Adrenal gland (tissue), 19 donors: ENCODE measurements at regions of chr16 and their contacts with region 1.

Region 1: DNA sequence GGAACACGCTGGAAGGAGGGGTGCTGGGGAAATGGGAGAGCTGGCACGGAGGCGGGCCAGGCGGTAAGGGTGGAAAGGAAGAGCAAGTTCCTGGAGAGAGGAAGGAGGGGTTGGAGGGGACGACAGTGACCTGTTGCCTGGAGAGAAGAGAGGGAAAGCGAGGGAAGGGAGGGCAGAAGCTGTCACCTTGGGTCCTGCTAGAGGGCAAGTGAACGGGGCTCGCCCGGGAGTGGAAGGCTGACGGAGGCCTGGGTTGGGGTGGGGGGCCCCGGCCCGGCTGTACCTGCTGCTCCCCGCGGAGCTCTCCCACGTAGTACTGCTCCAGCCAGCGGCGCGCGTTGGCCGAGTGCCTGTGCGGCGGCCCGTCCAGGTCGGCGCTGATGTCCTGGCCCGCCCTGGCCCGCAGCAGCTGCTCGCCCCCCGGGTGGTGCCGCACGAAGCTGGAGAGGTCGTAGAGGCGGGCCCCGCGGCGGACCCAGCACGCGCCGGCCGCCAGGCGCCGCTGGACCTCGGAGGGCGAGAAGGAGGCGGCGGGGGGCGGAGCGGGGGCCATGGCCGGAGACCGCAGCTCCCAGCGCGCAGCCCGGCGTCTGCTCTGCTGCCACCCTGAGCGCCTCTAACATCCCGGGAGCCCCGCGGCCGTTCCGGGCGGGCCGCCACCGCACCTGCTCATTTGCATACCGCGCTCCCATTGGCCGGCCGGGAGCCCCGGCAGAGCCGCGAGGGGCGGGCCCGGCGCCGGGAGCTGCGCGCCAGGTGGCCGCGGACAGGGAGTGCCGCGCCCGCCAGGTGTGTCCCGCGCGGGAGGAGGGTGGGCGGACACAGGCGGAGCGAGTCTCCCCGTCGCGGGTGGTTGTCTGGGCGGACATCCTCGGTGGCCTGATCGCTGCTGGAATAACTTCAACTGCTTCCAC is at the start of gene FA2H:
- DNase-seq: peak; percentile 80 to 89 (median 83)
- H3K4me3 ChIP-seq: peak within 1 kb of the TSS in 1 of 4 donors; percentile 61
- H3K27ac ChIP-seq: no peak within 1 kb of the TSS
- H3K4me1 ChIP-seq: peaks cover 6 to 15% of the 10 kb centered on the region in 2 donors
- H3K27me3 ChIP-seq: no peaks in the 10 kb centered on the region
- CTCF ChIP-seq: peak in 3 of 6 experiments; percentile 8 to 37 (median 31)
- POLR2A ChIP-seq: peak in 1 of 2 donors; percentile 50
- total RNA-seq, gene FA2H: 0.18 to 6.1 (median 0.39) TPM in 5 of 9 donors, not detected in the others

Region 2: DNA sequence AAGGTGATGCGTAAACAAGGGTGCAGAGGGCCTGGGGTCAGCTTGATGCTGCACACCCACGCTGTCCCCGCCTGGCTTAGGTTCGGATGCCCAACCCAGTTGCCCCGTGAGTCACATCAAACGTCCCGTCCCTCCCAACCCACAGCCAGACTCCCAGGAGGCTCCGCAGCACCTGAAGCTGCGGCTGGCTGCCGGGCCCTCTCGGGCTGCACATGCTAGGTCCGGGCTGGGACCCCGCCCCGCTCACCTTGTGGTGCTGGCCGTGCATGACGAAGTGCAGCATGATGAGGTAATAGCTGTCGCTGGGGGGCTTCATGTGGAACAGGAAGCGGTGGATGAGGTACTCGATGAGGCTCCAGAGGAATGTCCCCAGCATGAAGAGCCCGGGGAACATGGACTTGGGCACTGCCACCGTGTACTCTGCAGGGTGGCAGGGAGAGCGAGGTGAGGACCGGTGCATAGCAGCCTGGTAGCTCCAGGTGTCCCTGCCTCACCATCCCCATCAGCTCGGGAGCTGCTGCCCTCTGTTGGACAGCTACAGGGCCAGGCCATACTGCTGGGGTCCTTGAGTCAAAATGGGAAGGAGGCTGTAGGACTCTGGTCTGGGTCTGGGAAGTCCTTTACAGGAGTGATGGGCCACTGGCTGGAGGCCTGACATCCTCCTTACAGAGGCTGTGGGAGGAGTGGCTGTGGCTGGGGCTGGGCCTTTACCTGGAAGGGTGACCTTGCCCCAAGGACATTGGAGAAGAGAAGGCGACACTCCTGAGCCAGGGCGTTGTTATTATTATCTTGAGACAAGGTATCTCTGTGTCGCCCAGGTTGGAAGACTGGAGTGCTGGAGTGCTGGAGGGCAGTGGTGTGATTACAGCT is 55.5 kb before region 1 on chr16:
- intact Hi-C with region 1: loop called in 1 of 2 experiments (anchors 10 kb)
- DNase-seq: no peak
- H3K4me3 ChIP-seq: no peak overlapping the region
- H3K27ac ChIP-seq: no peak overlapping the region
- H3K4me1 ChIP-seq: no peaks in the 10 kb centered on the region
- H3K27me3 ChIP-seq: no peaks in the 10 kb centered on the region
- CTCF ChIP-seq: no peak
- POLR2A ChIP-seq: no peak